Posterior vena cava (tissue), 2 donors: ENCODE measurements at regions of chr3 and their contacts with region 1.

Region 1: DNA sequence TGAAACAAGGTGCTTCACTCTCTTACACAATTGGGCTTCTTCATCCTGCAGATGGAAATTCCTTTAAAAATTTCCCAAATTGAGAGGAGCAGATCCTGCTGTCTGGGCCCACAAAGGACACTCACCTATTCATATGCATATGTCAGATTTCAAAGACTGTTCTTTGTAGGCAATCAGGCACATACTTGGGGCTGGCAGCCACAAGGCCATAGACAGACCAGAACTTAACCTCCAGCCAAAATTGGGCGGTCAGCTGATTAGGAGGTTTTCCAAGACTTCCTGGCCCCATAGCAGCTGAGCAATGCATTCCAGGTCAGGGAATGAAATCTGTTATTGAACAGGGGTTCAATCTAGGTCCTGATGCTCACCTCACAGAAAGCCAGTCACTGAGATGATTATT is 15.0 kb upstream of the HPS3 start:
- DNase-seq: no peak

Region 2: GRCh38 chr3:148707601-148708380 is 406.7 kb before region 1 on chr3:
- intact Hi-C with region 1: no loop called
- DNase-seq: no peak

Region 3: DNA sequence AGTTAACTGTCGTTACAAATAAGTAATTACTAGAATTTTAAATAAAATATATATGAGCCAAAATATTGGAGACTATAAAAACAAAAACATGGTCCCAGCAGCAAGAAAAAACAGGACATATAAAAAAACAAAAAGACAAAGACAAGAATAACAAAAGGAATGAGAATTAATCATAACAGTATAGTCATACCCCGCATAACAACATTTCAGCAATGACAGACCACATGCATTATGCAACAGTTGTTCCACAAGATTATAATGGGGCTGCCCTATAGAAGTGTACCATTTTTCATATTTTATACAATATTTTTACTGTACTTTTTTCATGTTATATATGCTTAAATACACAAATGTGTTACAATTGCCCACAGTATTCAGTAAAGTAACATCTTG is 33.8 kb before region 1 on chr3:
- intact Hi-C with region 1: no loop called
- DNase-seq: no peak

Region 4: GRCh38 chr3:149494022-149494758 is 379.7 kb after region 1 on chr3:
- intact Hi-C with region 1: loop called in 1 of 2 experiments (anchors 10 kb)
- DNase-seq: no peak

Region 5: GRCh38 chr3:149860881-149861280 is 746.4 kb after region 1 on chr3:
- intact Hi-C with region 1: no loop called
- DNase-seq: no peak

Region 6: GRCh38 chr3:150721285-150722130 is 1607.0 kb after region 1 on chr3:
- intact Hi-C with region 1: no loop called
- DNase-seq: no peak